ENCODE measurements at regions of chr6 and their contacts with region 1.

Region 1: GRCh38 chr6:33248925-33249731 is 22.5 kb downstream of the VPS52 start:
- DNase-seq: peak; percentile 99
- H3K4me3 Mint-ChIP-seq: peak overlapping the region; percentile 88
- H3K27ac Mint-ChIP-seq: peak overlapping the region; percentile 90
- H3K4me1 Mint-ChIP-seq: peaks cover 43% of the 10 kb centered on the region
- H3K27me3 Mint-ChIP-seq: peaks cover 3% of the 10 kb centered on the region

Region 2: DNA sequence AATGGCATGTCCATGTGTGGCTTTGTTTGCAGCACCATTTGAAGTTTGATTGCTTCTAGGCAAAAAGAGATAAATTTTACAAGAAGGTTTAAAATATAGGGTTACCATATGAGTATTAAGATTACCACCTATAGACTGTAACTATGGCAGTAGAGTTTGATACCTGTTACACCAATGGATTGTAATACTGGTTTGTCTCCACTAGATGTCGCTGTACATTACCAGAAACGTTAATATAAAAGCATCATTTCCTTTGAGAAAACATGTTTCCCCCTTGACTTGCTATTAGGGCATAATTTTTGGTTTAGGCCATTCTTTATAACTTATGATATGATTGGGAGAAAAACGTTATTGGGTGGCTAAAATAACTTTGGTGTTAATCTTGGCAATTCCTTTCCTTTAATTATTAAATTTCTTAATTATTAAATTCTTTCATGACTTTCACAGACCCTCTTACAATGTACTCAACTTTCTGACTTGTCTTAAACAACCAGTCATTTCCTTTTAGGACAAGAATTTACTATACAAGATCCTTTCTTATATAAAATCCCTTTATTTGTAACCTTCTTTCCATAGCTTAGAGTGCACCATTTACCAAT is 130.5 kb before region 1 on chr6:
- CTCF ChIA-PET with region 1: interaction called, 91 read pairs
- POLR2A ChIA-PET with region 1: no interaction called
- intact Hi-C with region 1: loop called (anchors 1 kb)
- DNase-seq: no peak
- H3K4me3 Mint-ChIP-seq: no peak overlapping the region
- H3K27ac Mint-ChIP-seq: no peak overlapping the region
- H3K4me1 Mint-ChIP-seq: peaks cover 7% of the 10 kb centered on the region
- H3K27me3 Mint-ChIP-seq: peaks cover 41% of the 10 kb centered on the region

Region 3: DNA sequence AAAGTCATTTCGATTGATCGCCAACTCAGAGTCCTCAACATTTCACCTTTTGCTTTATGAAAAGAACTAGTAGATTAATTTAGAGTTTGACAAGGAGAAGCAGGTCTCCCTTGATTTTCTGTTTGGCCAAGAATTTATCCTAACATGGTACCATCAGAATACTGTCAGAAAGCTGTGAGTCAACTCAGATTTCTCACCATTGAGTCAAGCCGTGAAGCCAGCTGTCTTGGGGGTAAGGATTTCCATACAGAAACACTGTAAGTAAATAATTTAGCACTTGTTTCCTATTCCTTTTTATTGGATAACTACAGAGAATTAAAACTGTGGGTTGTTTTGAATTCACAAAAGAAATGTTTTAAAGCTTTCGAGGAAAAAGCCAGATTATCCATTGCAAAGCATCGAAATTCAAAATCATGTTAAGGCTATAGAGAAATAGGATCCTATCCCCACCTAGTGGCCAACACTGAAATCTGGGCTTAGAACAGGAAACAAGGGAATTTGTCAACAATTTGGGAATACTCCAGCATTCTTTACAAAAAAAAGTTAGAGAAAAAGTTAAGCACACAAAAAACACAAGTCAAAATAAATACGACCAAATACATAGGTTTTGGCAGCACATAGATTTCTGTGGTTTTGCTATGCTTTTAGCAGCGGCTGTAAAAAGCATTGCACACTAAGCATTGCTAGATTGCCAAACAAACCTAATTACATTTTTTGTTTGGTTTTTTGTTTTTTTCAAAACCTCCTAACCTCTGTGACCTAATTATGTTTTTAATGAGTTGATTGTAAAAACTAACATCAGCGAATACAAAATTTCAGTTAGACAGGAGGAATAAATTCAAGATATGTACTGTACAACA is 101.1 kb before region 1 on chr6:
- CTCF ChIA-PET with region 1: interaction called, 25 read pairs
- POLR2A ChIA-PET with region 1: no interaction called
- intact Hi-C with region 1: no loop called
- DNase-seq: no peak
- H3K4me3 Mint-ChIP-seq: no peak overlapping the region
- H3K27ac Mint-ChIP-seq: no peak overlapping the region
- H3K4me1 Mint-ChIP-seq: no peaks in the 10 kb centered on the region
- H3K27me3 Mint-ChIP-seq: peaks cover 24% of the 10 kb centered on the region

Region 4: DNA sequence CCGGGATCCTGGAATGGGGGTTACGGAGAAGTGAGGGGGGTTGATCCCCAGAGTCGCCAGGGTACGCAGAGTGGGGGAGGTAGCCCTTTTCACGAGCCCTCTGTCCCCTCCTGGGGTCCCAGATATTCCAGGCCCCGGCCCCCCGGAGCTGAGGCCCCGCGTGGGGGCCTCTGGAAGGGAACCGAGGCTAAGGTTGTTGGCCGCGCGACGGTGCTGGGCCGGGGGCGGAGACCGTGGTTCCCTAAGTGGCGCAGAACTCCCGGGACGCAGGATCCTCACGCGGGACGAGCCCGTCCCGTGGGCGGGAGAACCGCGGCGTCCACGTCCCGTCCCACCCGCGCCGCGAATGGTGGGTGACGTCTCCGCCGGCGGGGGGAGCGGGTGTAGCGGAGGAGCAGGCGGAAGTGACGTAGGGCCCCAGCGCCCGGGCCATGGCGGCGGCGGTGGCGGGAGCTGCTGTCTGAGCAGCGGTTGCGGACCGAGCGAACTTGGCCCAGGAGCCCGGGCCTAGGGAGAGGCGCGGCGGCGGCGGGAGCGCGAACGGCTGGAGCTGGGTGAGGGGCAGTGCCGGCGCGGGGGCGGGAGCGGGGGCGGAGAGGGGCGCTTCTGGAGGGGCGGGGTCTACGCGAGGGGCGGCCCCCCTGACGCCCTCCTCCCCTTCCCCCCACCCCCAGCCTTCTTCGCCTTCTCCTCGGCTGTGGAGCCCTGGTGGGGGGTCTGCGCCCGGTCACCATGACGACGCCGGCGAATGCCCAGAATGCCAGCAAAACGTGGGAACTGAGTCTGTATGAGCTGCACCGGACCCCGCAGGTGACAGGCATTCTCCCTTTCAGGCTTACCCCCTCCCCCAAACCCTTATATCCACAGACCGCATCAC is 40.8 kb before region 1 on chr6 and contains the start of gene RING1:
- CTCF ChIA-PET with region 1: interaction called, 21 read pairs
- POLR2A ChIA-PET with region 1: interaction called, 9 read pairs
- intact Hi-C with region 1: loop called (anchors 1 kb)
- DNase-seq: peak; percentile 89
- H3K4me3 Mint-ChIP-seq: peak within 1 kb of the TSS; percentile 88
- H3K27ac Mint-ChIP-seq: peak within 1 kb of the TSS; percentile 84
- H3K4me1 Mint-ChIP-seq: peaks cover 57% of the 10 kb centered on the region
- H3K27me3 Mint-ChIP-seq: peaks cover 10% of the 10 kb centered on the region
- total RNA-seq, gene RING1: 25.4 to 28.4 TPM

Region 5: GRCh38 chr6:33458676-33459075 is 209.5 kb after region 1 on chr6:
- CTCF ChIA-PET with region 1: no interaction called
- POLR2A ChIA-PET with region 1: no interaction called
- intact Hi-C with region 1: no loop called
- DNase-seq: no peak
- H3K4me3 Mint-ChIP-seq: no peak overlapping the region
- H3K27ac Mint-ChIP-seq: no peak overlapping the region
- H3K4me1 Mint-ChIP-seq: peaks cover 25% of the 10 kb centered on the region
- H3K27me3 Mint-ChIP-seq: no peaks in the 10 kb centered on the region

Region 6: DNA sequence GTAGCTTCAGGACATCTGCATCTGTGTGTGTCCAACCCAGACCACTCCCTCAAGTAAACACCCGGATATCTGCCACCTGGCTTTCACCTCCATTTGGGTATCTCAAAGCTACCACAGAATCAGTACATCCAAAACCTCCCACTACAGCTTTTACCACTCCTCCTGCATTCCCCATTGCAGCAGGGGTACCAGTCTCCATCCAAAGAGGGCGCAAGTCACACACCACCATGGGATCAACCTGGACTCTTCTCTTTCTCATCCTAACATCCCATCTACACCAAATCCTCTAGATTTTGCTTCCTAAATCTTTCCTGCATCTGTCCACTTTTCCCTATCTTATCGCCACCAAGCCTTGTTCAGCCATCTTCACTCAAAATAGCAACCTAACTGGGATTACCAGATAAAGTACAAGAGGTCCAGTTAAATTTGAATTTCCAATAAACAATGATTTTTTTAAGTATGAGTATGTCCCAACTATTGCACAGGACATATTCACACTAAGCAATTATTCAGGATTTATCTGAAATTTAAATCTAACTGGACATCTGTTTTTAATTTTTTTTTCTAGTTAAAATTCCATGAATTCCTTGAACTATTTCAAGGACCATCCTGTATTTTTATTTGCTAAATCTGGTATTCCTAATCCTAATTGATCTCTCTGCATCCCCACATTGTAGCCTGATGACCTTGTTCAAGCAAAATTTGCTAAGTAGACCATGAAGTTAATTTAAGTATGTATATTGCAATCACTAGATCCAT is 719.0 kb after region 1 on chr6:
- CTCF ChIA-PET with region 1: no interaction called
- POLR2A ChIA-PET with region 1: no interaction called
- intact Hi-C with region 1: no loop called
- DNase-seq: no peak
- H3K4me3 Mint-ChIP-seq: no peak overlapping the region
- H3K27ac Mint-ChIP-seq: no peak overlapping the region
- H3K4me1 Mint-ChIP-seq: peaks cover under 1% of the 10 kb centered on the region
- H3K27me3 Mint-ChIP-seq: peaks cover 21% of the 10 kb centered on the region